ENCODE measurements at regions of chr13 and their contacts with region 1.

Region 1: DNA sequence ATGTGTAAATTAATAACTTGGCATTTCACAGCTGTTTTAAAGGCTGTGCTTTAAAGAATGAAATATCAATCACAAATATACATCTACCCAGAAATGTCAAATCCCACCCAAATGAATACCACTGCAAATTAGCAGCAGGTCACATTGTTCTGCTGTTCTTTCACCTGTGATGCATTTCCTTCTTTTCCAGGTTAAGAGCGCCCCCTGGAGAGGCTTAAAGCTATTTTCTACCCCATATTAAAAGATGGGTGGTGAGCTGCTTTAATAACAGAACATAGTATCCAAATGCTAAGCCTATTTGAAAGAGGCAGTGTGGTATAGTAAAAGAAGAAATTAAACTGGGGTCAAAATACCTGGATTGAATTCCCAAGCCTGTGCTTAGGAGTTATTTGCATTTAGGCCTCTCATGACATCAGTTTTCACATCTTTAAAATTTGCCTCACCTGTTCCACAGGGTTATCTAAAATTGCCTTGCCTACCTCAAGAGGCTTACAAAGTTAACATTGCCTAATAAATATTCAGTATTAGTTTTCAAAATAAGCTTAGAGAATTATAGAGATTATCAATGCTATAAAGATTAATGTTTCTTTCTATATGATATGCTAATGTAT is 396.9 kb upstream of the SLITRK5 start:
- DNase-seq: peak; percentile 60
- H3K4me3 ChIP-seq: no peak overlapping the region
- H3K27ac ChIP-seq: no peak overlapping the region
- H3K4me1 ChIP-seq: no peaks in the 10 kb centered on the region
- H3K27me3 ChIP-seq: no peaks in the 10 kb centered on the region
- CTCF ChIP-seq: peak; percentile 77

Region 2: GRCh38 chr13:86085890-86086289 is 1188.4 kb before region 1 on chr13:
- CTCF ChIA-PET with region 1: no interaction called
- POLR2A ChIA-PET with region 1: no interaction called
- intact Hi-C with region 1: loop called (anchors 10 kb)
- DNase-seq: peak; percentile 1
- H3K4me3 ChIP-seq: no peak overlapping the region
- H3K27ac ChIP-seq: no peak overlapping the region
- H3K4me1 ChIP-seq: no peaks in the 10 kb centered on the region
- H3K27me3 ChIP-seq: no peaks in the 10 kb centered on the region
- CTCF ChIP-seq: peak; percentile 28; the same call in 1 of the 2 replicates

Region 3: DNA sequence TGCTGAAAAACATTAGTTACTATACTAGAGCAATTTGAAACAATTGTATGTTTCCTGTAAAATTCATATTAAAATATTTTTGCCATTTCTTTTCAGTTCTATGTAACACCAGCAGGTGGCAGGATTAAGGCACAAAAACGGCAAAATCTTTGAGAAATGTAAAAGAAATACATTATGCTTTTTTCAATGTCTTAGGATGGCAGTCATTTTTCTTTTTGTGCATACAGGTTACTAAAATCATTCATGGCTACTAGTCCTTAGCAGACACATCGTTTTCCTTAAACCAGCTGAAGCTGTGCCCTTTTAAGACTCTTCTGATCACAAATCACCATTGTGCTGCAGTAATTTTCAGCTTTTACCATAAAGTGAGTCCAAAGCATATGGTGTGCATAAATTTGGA is 403.9 kb before region 1 on chr13:
- CTCF ChIA-PET with region 1: interaction called, 14 read pairs
- POLR2A ChIA-PET with region 1: no interaction called
- intact Hi-C with region 1: loop called (anchors 2 kb)
- DNase-seq: peak; percentile 37
- H3K4me3 ChIP-seq: no peak overlapping the region
- H3K27ac ChIP-seq: no peak overlapping the region
- H3K4me1 ChIP-seq: no peaks in the 10 kb centered on the region
- H3K27me3 ChIP-seq: no peaks in the 10 kb centered on the region
- CTCF ChIP-seq: peak; percentile 76

Region 4: GRCh38 chr13:87570669-87571068 is 296.4 kb after region 1 on chr13:
- CTCF ChIA-PET with region 1: no interaction called
- POLR2A ChIA-PET with region 1: no interaction called
- intact Hi-C with region 1: no loop called
- DNase-seq: no peak
- H3K4me3 ChIP-seq: no peak overlapping the region
- H3K27ac ChIP-seq: no peak overlapping the region
- H3K4me1 ChIP-seq: no peaks in the 10 kb centered on the region
- H3K27me3 ChIP-seq: no peaks in the 10 kb centered on the region
- CTCF ChIP-seq: no peak

Measured in A673 (cell line).